ENCODE measurements at regions of chr17 and their contacts with region 1.

Region 1: DNA sequence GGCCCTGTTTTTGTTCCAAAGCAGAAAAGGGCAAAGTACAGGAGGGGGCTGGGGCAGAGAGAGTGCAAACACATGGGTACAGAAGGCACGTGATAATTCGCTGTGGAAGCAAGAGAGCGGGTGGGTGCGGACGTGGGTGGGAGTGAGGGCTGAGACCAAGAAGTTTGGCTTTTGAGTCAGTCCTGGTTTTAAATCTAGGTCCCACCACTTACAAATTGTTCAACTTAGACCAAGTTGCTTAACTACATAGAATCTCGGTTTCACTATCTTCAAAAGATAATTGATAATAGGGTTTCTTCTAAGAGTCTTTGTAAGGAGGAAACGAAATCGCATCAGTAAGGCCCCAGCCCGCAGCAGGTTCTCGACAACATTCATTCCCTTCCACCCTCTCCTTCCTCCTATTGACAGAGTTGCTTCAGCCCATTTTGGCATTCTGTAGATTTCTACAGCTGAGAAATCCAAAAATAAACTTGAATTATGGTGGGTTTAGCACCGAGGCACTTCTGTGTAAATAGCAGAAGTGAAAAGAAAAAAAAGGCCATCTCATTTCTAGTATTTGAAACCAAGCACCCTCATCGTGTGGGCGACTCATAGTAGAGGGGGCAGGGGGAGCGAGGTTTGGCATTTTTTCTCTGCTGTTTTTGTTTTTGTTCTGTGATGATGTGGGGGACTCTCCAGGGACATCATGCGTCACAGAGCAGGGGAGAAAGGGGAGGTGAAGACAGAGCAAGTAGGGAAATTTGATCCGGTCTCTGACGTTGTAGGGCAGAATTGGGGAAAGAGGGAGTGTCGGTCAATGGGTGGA is 33.6 kb upstream of the CCR7 start:
- DNase-seq: peak; percentile 50 to 90 (median 83)
- ATAC-seq: peak; percentile 28 to 67
- H3K4me3 Mint-ChIP-seq: peak overlapping the region; percentile 53 to 86 (median 77)
- H3K27ac Mint-ChIP-seq: peak overlapping the region; percentile 95 to 100 (median 100)
- H3K4me1 Mint-ChIP-seq: peaks cover 48 to 99% (median 97%) of the 10 kb centered on the region in 4 donors
- H3K27me3 Mint-ChIP-seq: no peaks in the 10 kb centered on the region

Region 2: GRCh38 chr17:40317880-40318829 is 280.7 kb before region 1 on chr17:
- POLR2A ChIA-PET with region 1: interaction called, 15 read pairs
- DNase-seq: peak; percentile 85 to 94 (median 89)
- ATAC-seq: peak; percentile 53 to 64
- H3K4me3 Mint-ChIP-seq: peak overlapping the region; percentile 83 to 97 (median 96)
- H3K27ac Mint-ChIP-seq: peak overlapping the region; percentile 98 to 100 (median 100)
- H3K4me1 Mint-ChIP-seq: peaks cover 52 to 79% (median 65%) of the 10 kb centered on the region in 4 donors
- H3K27me3 Mint-ChIP-seq: peaks cover 0 to 6% (median 0%) of the 10 kb centered on the region in 5 donors

Region 3: DNA sequence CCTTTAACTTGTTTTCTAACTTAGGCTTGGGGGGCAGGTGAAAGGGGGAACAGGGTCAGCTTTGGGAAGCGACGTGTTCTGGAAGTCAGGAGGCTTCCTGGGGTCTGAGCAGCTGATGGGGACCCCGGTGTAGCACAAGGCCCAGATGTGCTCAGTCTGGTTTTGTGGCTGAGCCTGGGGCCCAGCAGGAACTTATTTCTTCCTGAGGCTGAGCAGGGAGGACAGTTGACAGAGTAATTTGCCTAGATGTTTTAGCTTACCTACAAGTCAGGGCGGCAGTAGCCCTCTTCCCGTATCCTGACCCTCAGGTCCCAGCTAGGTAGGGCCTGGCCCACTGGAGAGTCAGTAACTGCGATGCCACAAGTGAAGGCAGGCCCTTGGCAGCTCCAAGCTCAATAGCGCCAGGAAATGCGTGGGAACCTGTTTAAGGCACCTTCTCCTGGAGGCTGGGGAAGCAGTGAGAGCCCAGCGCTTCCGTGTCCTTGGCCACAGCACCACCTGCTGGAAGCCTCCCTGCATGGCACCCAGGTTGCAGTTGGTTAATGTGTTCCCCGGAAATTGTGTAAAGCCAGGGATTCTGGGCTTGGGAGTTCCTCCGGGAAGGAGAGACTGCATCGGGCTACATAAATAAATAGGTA is 38.8 kb before region 1 on chr17:
- POLR2A ChIA-PET with region 1: interaction called, 2,269 read pairs
- DNase-seq: peak; percentile 69 to 91 (median 84)
- ATAC-seq: peak; percentile 12 to 27
- H3K4me3 Mint-ChIP-seq: peak overlapping the region; percentile 91 to 100 (median 97)
- H3K27ac Mint-ChIP-seq: peak overlapping the region; percentile 95 to 100 (median 100)
- H3K4me1 Mint-ChIP-seq: peaks cover 53 to 95% (median 75%) of the 10 kb centered on the region in 4 donors
- H3K27me3 Mint-ChIP-seq: no peaks in the 10 kb centered on the region

Region 4: DNA sequence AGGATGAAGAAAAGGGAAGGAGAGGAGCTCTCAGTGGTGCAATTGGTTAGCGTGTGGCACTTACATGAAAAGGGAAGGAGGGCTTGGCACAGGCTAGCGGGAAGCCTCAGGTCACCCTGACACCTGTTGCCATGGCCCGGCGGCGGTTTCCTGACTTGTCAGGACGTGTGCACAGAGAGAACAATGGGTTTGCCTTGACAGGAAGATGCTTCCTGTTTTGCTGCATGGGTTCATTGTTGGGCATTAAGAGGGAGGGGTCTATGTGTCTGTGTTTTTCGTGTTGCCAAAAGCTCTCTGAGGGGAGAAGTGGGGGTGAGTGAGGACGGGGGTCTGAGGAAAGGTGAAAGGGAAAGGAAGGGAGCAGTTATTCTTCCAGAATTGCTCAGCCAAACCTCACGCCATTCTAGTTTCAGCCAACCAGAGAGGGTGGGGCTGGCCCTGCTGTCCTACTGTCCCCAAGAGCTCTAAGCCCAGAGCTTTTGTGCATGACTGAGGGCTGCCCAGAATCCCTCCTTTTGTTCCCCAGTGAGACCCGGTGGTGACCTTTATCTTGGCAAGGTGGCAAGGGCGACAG is 16.4 kb before region 1 on chr17:
- POLR2A ChIA-PET with region 1: interaction called, 116 read pairs
- DNase-seq: peak; percentile 56 to 93 (median 80)
- ATAC-seq: peak; percentile 84 to 92
- H3K4me3 Mint-ChIP-seq: peak overlapping the region; percentile 52 to 87 (median 72)
- H3K27ac Mint-ChIP-seq: peak overlapping the region; percentile 88 to 99 (median 97)
- H3K4me1 Mint-ChIP-seq: peaks cover 59 to 96% (median 94%) of the 10 kb centered on the region in 4 donors
- H3K27me3 Mint-ChIP-seq: no peaks in the 10 kb centered on the region

Region 5: GRCh38 chr17:40615295-40615988 is 16.6 kb after region 1 on chr17:
- POLR2A ChIA-PET with region 1: interaction called, 237 read pairs
- DNase-seq: peak in 9 of 10 donors; percentile 48 to 81 (median 67)
- ATAC-seq: peak; percentile 59
- H3K4me3 Mint-ChIP-seq: peak overlapping the region; percentile 67 to 90 (median 85)
- H3K27ac Mint-ChIP-seq: peak overlapping the region; percentile 93 to 100 (median 98)
- H3K4me1 Mint-ChIP-seq: peaks cover 35 to 81% (median 81%) of the 10 kb centered on the region in 4 donors
- H3K27me3 Mint-ChIP-seq: no peaks in the 10 kb centered on the region

Region 6: DNA sequence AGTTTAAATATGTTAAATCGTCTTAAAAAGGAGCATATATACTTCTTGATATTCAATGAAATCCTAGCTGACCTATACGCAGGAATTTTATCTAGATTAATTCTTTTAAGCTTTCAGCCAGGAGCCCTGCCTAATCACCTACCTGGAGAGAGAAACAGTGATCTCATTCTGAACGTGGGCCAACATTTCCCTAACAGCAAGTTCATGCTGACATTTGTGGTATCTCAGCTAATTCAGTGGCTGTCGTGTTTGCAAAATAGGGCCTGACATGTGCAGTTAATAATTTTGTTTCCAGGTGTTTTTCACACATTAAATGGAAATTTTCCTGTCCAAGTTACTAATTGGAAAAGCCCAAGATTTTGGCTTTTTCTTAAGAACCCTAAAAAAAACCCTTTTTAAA is 87.3 kb after region 1 on chr17:
- POLR2A ChIA-PET with region 1: no interaction called
- DNase-seq: no peak
- ATAC-seq: no peak
- H3K4me3 Mint-ChIP-seq: no peak overlapping the region
- H3K27ac Mint-ChIP-seq: no peak overlapping the region
- H3K4me1 Mint-ChIP-seq: no peaks in the 10 kb centered on the region
- H3K27me3 Mint-ChIP-seq: peaks cover 0 to 22% (median 2%) of the 10 kb centered on the region in 5 donors